CD4-positive, alpha-beta T cell (primary cell): ENCODE measurements at regions of chr18 and their contacts with region 1.

Region 1: DNA sequence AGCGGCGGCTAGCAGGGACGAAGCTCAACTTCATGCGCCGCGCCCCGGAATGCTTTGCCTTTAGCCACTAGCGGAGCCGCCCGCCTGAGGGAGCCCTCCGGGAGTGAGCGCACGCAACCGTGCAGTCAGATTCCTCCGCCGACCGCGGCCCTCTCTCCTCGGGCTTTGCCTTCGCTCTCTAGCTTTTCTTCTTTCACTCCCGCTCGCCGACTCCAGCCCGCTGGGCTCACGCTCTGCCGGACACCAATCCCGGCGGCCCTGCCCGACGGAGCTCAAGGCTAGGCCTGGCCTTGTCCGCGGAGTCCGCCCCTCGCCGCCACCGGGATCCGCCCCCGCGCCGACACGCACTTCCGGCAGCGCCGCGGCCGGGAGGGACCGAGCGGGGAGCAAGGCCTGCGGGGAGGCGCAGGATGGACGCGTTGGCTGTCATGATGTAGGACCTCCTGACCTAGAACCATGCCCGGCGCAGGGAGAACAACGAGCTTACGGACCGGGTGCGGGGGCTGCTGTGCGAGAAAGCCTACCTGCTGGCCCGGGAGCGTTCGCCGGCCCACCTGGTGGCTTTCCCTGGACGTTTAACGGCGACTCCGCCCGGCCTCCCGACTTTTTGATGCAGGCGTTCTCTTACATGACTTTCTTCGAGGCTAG is 40.8 kb upstream of the AKAIN1 start:
- DNase-seq: peak; percentile 74 to 92 (median 84)
- ATAC-seq: peak; percentile 86
- H3K4me3 ChIP-seq: peak overlapping the region; percentile 82
- H3K4me3 Mint-ChIP-seq: peak overlapping the region; percentile 94
- H3K27ac ChIP-seq: peak overlapping the region; percentile 94 to 97
- H3K27ac Mint-ChIP-seq: peak overlapping the region; percentile 99
- H3K4me1 ChIP-seq: peaks cover 25% of the 10 kb centered on the region
- H3K4me1 Mint-ChIP-seq: peaks cover 68% of the 10 kb centered on the region
- H3K27me3 ChIP-seq: no peaks in the 10 kb centered on the region
- H3K27me3 Mint-ChIP-seq: peaks cover 6% of the 10 kb centered on the region
- CTCF ChIP-seq: peak; percentile 53

Region 2: DNA sequence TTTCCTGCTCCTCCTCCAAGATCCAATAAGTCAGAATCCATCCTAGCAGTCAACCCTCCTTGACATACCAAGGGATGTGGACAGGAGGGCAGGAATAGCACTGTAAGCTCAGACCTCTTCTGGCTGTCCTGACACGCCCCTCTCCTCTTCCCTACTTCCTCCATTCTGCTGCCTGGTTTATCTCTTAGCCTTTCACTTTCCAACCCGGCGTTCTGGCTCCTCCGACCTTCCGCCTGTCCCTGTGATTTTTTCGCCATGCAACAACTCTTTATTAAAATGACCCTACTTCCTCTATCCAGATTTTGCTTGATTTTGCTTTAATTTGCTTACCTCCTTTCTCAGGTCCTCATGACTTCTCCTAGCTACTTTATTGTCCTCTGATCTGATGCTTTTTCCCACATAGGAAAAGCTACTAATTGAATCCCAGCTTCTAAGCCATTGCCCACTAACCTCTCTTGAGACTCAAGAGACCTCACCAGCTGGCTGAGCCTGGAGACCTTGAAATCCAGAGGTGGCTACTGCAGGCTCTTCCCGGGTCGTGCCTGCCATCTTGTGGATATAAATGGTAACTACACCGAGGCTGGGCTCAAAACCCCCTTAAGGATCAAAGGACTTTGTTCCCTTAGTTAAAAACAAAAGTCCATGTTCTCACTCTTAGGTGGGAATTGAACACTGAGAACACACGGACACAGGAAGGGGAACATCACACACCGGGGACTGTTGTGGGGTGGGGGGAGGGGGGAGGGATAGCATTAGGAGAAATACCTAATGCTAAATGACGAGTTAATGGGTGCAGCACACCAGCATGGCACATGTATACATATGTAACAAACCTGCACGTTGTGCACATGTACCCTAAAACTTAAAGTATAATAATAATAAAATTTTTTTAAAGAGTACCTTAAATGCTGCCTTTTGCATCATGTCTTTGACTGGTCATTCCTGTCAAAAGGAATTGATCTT is 180.2 kb before region 1 on chr18:
- CTCF ChIA-PET with region 1: no interaction called
- POLR2A ChIA-PET with region 1: interaction called, 10 read pairs
- intact Hi-C with region 1: no loop called
- DNase-seq: peak; percentile 13 to 70 (median 26)
- ATAC-seq: peak; percentile 25
- H3K4me3 ChIP-seq: no peak overlapping the region
- H3K4me3 Mint-ChIP-seq: no peak overlapping the region
- H3K27ac ChIP-seq: no peak overlapping the region
- H3K27ac Mint-ChIP-seq: peak overlapping the region; percentile 40
- H3K4me1 ChIP-seq: peaks cover 18% of the 10 kb centered on the region
- H3K4me1 Mint-ChIP-seq: peaks cover 23% of the 10 kb centered on the region
- H3K27me3 ChIP-seq: no peaks in the 10 kb centered on the region
- H3K27me3 Mint-ChIP-seq: peaks cover 8% of the 10 kb centered on the region
- CTCF ChIP-seq: peak; percentile 68

Region 3: GRCh38 chr18:5159080-5159479 is 78.8 kb before region 1 on chr18:
- CTCF ChIA-PET with region 1: no interaction called
- POLR2A ChIA-PET with region 1: interaction called, 54 read pairs
- intact Hi-C with region 1: loop called in 1 of 2 experiments (anchors 5 kb)
- DNase-seq: peak in 11 of 14 experiments; percentile 3 to 60 (median 27)
- ATAC-seq: peak; percentile 93
- H3K4me3 ChIP-seq: no peak overlapping the region
- H3K4me3 Mint-ChIP-seq: peak overlapping the region; percentile 72
- H3K27ac ChIP-seq: peak overlapping the region in 1 of 2 donors; percentile 37
- H3K27ac Mint-ChIP-seq: peak overlapping the region; percentile 85
- H3K4me1 ChIP-seq: peaks cover 12% of the 10 kb centered on the region
- H3K4me1 Mint-ChIP-seq: peaks cover 56% of the 10 kb centered on the region
- H3K27me3 ChIP-seq: no peaks in the 10 kb centered on the region
- H3K27me3 Mint-ChIP-seq: no peaks in the 10 kb centered on the region
- CTCF ChIP-seq: no peak

Region 4: GRCh38 chr18:5288517-5288935 is 50.7 kb after region 1 on chr18:
- CTCF ChIA-PET with region 1: interaction called, 3 read pairs
- POLR2A ChIA-PET with region 1: interaction called, 459 read pairs
- intact Hi-C with region 1: no loop called
- DNase-seq: no peak
- ATAC-seq: no peak
- H3K4me3 ChIP-seq: no peak overlapping the region
- H3K4me3 Mint-ChIP-seq: no peak overlapping the region
- H3K27ac ChIP-seq: no peak overlapping the region
- H3K27ac Mint-ChIP-seq: peak overlapping the region; percentile 55
- H3K4me1 ChIP-seq: peaks cover 5% of the 10 kb centered on the region
- H3K4me1 Mint-ChIP-seq: peaks cover 57% of the 10 kb centered on the region
- H3K27me3 ChIP-seq: no peaks in the 10 kb centered on the region
- H3K27me3 Mint-ChIP-seq: no peaks in the 10 kb centered on the region
- CTCF ChIP-seq: no peak

Region 5: DNA sequence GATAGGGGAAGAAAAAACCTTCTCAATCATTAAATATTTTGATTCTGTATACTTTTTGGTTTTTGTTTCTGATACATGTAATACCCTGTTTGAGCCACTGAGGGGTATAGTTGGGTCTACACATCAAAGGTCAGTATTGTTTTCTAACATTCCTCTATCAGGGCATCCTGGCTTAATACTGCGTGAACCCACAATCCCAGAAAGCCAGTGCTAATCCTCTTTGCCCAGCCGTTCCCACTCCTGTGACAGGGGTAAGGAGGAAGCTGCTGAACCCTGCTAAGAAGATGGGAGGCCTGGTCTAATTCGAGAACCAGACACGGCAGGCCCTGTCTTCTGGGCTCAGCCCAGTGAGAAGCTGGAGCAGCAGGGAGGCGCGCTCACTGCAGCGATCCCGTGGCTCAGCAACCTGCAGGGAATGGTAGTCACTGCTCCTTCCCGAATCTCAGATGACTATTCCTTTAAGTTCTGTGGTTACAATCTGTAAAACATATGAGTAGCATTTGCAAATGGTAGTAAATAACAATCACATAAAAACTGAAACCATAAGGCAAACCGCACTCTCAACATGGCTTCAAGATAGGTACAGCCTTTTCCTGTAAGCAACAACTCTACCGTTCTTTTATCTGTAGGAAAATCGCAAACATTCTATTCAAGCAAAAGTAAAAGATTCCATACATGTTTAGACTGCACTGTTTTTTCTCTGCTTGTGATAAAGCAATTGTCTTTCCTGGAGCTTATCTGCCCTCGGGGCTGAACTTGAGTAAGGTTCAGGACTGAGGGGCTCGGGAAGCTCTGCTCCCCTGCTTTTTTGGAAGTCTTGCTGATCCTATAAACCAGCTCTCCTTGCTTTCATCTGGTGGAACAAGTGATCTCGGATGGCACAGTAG is 219.0 kb after region 1 on chr18:
- CTCF ChIA-PET with region 1: no interaction called
- POLR2A ChIA-PET with region 1: interaction called, 12 read pairs
- intact Hi-C with region 1: no loop called
- DNase-seq: peak in 5 of 14 experiments; percentile 4 to 50 (median 30)
- ATAC-seq: peak; percentile 78
- H3K4me3 ChIP-seq: peak overlapping the region; percentile 50
- H3K4me3 Mint-ChIP-seq: peak overlapping the region; percentile 84
- H3K27ac ChIP-seq: peak overlapping the region in 1 of 2 donors; percentile 65
- H3K27ac Mint-ChIP-seq: peak overlapping the region; percentile 90
- H3K4me1 ChIP-seq: peaks cover 5% of the 10 kb centered on the region
- H3K4me1 Mint-ChIP-seq: peaks cover 36% of the 10 kb centered on the region
- H3K27me3 ChIP-seq: no peaks in the 10 kb centered on the region
- H3K27me3 Mint-ChIP-seq: no peaks in the 10 kb centered on the region
- CTCF ChIP-seq: peak; percentile 59

Region 6: DNA sequence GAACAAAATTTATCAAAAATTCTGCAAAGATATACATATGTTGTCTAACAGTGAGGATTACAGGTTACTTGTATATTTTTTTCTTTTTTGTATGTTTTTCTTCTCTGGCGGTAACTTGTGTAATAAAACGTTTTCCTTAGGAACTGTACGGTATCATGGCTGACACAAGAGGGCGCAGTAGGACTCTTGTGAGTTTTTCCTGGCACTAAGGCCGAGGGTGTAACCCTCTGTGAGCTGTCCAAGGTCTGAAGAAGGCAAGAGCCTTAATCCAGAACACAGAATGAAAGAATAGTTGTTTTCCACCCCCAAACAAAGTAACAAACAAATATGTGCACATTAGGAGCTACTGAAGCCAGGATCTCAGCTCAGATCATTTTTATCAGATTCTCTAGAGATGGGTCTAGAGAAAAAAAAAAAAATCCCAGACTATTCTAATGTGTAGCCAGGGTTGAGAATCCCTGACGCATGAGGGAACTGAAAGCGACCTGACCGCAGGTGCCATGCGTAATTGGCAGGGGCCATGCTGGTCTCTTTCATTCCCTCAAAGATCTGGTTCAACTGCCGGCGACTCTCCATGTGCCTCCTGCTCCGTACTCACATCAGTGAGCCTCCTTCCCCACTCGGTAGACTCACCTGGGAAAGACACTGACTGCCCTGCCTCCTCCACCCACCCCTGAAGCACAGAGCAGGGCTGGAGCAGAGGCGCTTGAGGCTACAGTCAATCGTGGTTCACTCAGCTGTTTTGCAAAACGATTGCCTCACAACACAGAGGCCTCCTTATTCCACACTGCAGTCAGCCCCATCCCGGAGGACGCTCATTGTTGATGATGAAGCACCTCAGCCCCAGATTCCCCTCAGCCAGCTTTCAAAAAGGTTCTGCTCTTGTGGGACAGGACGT is 630.6 kb after region 1 on chr18:
- CTCF ChIA-PET with region 1: no interaction called
- POLR2A ChIA-PET with region 1: no interaction called
- intact Hi-C with region 1: no loop called
- DNase-seq: peak in 2 of 14 experiments; percentile 28 to 30
- ATAC-seq: no peak
- H3K4me3 ChIP-seq: no peak overlapping the region
- H3K4me3 Mint-ChIP-seq: no peak overlapping the region
- H3K27ac ChIP-seq: no peak overlapping the region
- H3K27ac Mint-ChIP-seq: no peak overlapping the region
- H3K4me1 ChIP-seq: no peaks in the 10 kb centered on the region
- H3K4me1 Mint-ChIP-seq: no peaks in the 10 kb centered on the region
- H3K27me3 ChIP-seq: no peaks in the 10 kb centered on the region
- H3K27me3 Mint-ChIP-seq: peaks cover 6% of the 10 kb centered on the region
- CTCF ChIP-seq: no peak